Dendritic cell treated with granulocyte-macrophage colony-stimulating factor and Interleukin-4, amounts not matched to agents 40 ng/mL and 50 ng/mL, for 4 days (primary cell): ENCODE measurements at regions of chr10 and their contacts with region 1.

Region 1: DNA sequence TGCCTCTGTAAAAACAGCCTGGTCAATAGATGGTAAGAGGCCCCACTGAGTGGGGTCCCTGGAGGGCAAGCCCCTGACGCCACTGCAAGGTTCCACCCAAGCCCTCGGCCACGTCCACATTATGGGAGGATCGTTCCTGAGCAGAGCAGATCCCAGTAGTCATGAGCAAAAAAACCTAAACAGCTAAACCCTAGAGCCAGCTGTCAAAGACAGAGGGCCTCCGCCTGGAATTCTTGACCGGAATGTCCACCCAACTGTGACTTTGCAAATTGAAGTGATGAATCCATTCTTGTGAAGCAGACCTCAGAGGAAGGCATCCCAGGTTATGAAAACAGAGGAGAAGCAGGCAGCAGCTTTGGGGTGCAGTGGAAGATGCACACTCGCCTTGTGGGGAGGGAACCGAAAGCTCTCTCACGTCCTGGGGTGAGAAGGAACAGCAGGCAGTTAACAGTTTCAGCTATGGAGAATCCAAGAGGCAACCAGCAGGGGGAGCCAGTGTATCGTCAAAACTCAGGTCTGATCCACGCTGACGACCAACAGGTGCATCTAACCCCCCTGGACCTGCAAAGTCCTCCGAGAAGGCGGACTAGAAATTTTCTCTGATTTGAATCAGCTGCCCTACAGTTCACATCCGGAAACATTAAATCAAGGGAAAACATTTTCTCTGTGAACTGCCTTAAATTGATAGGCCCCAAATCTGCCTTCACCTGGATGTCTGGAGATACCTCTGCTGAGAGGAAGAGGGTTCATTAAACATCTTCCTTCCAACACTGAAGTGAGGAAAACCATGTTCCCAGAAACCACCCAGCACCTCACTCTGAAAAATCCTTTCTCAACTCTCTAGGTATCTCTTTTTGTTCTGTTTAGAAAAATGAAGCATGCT is 139.1 kb upstream of the PFKP start:
- H3K4me3 Mint-ChIP-seq: no peak overlapping the region
- H3K27ac Mint-ChIP-seq: no peak overlapping the region
- H3K4me1 Mint-ChIP-seq: peaks cover 52% of the 10 kb centered on the region
- H3K27me3 Mint-ChIP-seq: peaks cover 17% of the 10 kb centered on the region

Region 2: DNA sequence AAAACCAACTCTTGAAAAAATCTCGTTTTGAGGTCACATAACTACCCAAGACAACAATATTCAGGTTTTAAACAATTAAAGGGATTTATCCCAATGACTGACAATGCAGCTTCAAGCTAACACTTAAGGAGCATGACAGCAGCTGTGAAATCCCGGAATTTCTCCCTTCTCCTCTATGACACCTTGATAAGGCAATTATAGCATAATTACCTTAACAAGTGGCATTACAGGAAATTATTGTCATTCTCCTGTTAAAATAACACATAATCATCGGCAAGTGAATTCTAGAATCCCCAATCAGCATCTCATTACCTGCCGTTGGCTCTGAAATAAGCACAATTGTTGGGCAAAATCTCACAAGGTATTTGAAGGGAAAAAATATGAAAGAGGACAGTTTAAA is 277.9 kb before region 1 on chr10:
- intact Hi-C with region 1: no loop called
- H3K4me3 Mint-ChIP-seq: no peak overlapping the region
- H3K27ac Mint-ChIP-seq: no peak overlapping the region
- H3K4me1 Mint-ChIP-seq: no peaks in the 10 kb centered on the region
- H3K27me3 Mint-ChIP-seq: no peaks in the 10 kb centered on the region

Region 3: GRCh38 chr10:2680821-2681220 is 247.4 kb before region 1 on chr10:
- intact Hi-C with region 1: no loop called
- H3K4me3 Mint-ChIP-seq: no peak overlapping the region
- H3K27ac Mint-ChIP-seq: no peak overlapping the region
- H3K4me1 Mint-ChIP-seq: no peaks in the 10 kb centered on the region
- H3K27me3 Mint-ChIP-seq: no peaks in the 10 kb centered on the region

Region 4: GRCh38 chr10:2839081-2839725 is 89.0 kb before region 1 on chr10:
- intact Hi-C with region 1: loop called (anchors 2 kb)
- H3K4me3 Mint-ChIP-seq: no peak overlapping the region
- H3K27ac Mint-ChIP-seq: no peak overlapping the region
- H3K4me1 Mint-ChIP-seq: peaks cover 8% of the 10 kb centered on the region
- H3K27me3 Mint-ChIP-seq: peaks cover 14% of the 10 kb centered on the region

Region 5: DNA sequence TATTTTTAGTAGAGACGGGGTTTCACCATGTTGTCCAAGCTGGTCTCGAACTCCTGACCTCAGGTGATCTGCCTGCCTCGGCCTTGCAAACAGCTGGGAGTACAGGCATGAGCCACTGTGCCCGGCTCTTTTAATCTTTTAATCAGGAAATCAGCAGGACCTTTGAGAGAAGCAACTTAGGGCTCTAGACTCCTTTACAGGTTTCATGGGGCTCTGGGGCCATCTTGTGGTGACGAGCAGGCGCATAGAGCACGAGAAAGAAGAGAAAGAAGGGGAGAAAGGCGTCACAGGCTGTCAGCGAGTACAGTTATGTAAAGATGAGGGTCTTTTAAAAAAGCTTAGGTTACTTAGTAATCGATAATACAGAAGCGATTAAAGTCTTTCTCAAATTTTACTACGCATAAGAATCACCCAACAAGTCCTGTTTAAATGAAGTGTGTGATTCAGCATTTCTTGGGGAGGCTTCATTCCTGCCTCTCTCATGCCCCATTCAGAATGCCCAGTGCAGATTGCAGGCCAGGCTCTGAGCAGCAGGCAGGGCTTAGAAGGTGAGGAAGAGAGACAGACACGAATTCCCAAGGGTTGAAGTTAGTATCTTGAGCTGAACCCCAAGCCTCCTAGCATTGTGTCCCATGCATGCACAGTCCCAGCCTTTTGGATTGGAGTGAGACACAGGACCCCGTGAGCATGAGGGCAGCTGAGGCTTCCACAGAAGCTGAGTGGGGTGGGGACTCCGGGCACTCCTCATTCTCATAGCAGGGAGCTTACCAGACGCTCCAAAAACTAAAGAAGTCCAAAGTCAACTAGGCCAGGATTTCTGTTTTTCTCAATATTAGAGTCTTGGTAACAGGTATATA is 115.5 kb after region 1 on chr10:
- intact Hi-C with region 1: loop called (anchors 1 kb)
- H3K4me3 Mint-ChIP-seq: no peak overlapping the region
- H3K27ac Mint-ChIP-seq: peak overlapping the region; percentile 73
- H3K4me1 Mint-ChIP-seq: peaks cover 74% of the 10 kb centered on the region
- H3K27me3 Mint-ChIP-seq: peaks cover 17% of the 10 kb centered on the region

Region 6: GRCh38 chr10:3248888-3249758 is 320.9 kb after region 1 on chr10:
- intact Hi-C with region 1: no loop called
- H3K4me3 Mint-ChIP-seq: no peak overlapping the region
- H3K27ac Mint-ChIP-seq: no peak overlapping the region
- H3K4me1 Mint-ChIP-seq: peaks cover 6% of the 10 kb centered on the region
- H3K27me3 Mint-ChIP-seq: peaks cover 39% of the 10 kb centered on the region